OCI-LY7 (cell line): ENCODE measurements at regions of chr6 and their contacts with region 1.

Region 1: DNA sequence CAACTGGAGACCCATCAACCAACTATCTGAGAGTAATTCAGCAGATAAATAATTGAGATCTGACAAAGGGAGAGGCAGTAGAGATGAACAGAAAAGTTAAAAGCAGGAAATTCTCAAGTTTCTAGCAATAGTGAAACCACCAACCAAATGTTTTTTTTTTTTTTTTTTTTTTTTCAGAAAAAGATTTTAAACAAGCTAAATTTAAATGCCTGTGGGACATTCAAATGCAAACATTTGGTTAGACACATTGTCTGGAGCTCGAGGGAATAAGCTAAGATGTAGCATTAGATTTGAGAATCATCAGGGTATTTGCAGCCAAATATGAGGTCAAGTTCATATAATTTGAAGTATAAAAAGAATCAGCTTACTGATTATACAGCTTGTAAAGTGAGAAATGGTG is 16.4 kb downstream of the RANBP9 start:
- DNase-seq: no peak
- H3K4me3 ChIP-seq: no peak overlapping the region
- H3K27ac ChIP-seq: no peak overlapping the region
- H3K4me1 ChIP-seq: peaks cover 9% of the 10 kb centered on the region
- CTCF ChIP-seq: no peak

Region 2: GRCh38 chr6:13660893-13661292 is 34.4 kb before region 1 on chr6:
- CTCF ChIA-PET with region 1: no interaction called
- POLR2A ChIA-PET with region 1: interaction called, 11 read pairs
- intact Hi-C with region 1: no loop called
- DNase-seq: no peak
- H3K4me3 ChIP-seq: no peak overlapping the region
- H3K27ac ChIP-seq: no peak overlapping the region
- H3K4me1 ChIP-seq: peaks cover 18% of the 10 kb centered on the region
- CTCF ChIP-seq: no peak

Region 3: DNA sequence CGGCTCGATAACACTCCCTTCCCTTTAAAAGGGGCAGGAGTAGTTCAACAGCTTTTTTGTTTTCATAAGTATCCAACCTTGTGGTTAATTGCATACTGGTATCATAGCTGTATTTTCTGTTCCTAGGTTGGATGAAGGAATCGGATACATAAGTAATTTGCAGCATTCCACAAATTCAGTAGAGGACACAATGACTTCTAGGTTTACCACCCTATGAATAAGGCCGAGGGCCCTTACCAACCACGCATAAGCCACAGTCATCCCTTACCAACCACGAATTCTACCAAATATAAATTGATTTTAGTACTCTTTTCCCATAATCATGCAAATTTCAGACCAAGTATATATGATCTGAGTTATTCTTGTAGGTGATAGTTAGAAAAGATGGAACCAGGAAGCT is 82.8 kb after region 1 on chr6:
- CTCF ChIA-PET with region 1: no interaction called
- POLR2A ChIA-PET with region 1: no interaction called
- intact Hi-C with region 1: no loop called
- DNase-seq: no peak
- H3K4me3 ChIP-seq: no peak overlapping the region
- H3K27ac ChIP-seq: no peak overlapping the region
- H3K4me1 ChIP-seq: no peaks in the 10 kb centered on the region
- CTCF ChIP-seq: no peak

Region 4: DNA sequence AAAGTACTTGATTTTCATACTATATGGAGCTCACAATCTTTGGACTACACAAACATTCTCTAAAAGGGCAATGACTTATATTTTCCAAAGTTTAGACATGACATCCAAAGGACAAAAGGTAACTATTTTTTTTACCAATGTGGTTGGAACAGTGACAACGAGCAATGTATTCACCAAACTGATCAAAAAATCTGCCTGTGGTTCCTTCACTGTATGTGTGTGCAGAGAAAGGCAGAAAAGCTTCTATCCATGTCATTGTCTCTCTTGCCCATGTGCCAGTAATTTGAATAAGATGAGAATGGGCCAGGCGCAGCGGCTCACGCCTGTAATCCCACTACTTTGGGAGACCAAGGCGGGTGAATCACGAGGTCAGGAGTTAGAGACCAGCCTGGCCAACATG is 93.6 kb after region 1 on chr6:
- CTCF ChIA-PET with region 1: no interaction called
- POLR2A ChIA-PET with region 1: no interaction called
- intact Hi-C with region 1: no loop called
- DNase-seq: no peak
- H3K4me3 ChIP-seq: no peak overlapping the region
- H3K27ac ChIP-seq: no peak overlapping the region
- H3K4me1 ChIP-seq: no peaks in the 10 kb centered on the region
- CTCF ChIP-seq: no peak